Activated T-helper 1 cell treated with anti-CD3 and anti-CD28 coated beads, Interleukin-12 subunit alpha, Interleukin-12 subunit beta, Interleukin-2, Interleukin-4 antibody, amounts not matched to agents 30 ng/mL and 10 ng/mL and 1 ng/mL, durations not matched to agents 14 hours and 24 hours and 36 hours (primary cell): ENCODE measurements at regions of chr4 and their contacts with region 1.

Region 1: DNA sequence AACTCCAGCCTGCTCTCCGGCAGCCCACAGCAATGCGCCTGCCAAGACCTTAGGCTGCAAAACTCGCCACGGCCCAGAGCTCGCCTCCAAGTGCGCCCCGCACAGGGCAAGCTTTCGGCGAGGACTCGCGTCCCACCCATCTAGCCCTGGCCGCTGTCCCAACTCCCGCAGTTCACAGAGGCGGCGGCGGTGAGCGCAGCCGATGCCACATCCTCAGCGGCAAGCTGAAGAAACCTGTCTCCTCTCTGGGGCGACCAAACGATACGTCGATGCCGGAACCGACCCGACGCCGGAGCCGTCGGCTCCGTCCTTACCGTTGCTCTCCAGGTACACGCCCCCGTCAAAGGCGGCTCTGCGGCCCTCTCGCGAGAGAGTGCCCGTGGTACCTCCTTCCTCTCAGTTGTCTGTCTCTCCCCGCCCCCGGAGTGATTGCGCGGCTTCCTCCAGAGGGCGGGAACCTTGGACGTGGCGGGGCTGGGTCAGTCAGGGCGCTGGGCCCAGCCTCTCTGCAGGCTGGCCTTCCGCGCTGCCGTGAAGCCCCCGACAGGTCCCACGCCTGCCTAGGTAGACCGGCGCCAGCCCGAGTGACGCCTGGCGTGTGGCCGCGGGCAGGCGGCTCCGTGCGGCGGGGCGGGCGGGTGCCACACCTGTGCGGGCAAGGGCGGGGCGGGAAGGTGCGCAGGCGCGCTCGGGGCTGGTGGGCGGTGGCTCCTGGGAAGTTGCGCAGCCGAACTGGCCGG is 380 bp upstream of the RAB33B start:
- DNase-seq: peak; percentile 95
- H3K4me3 Mint-ChIP-seq: peak overlapping the region; percentile 94
- H3K27ac Mint-ChIP-seq: peak overlapping the region; percentile 99
- H3K4me1 Mint-ChIP-seq: peaks cover 58% of the 10 kb centered on the region
- H3K27me3 Mint-ChIP-seq: no peaks in the 10 kb centered on the region

Region 2: GRCh38 chr4:139015269-139015947 is 438.1 kb before region 1 on chr4 and contains the start of gene NOCT:
- intact Hi-C with region 1: loop called (anchors 1 kb)
- DNase-seq: peak; percentile 90
- H3K4me3 Mint-ChIP-seq: peak within 1 kb of the TSS; percentile 96
- H3K27ac Mint-ChIP-seq: peak within 1 kb of the TSS; percentile 91
- H3K4me1 Mint-ChIP-seq: peaks cover 43% of the 10 kb centered on the region
- H3K27me3 Mint-ChIP-seq: no peaks in the 10 kb centered on the region
- total RNA-seq, gene NOCT: 24.1 and 26.9 TPM in 2 replicates

Region 3: GRCh38 chr4:139266583-139267257 is 186.8 kb before region 1 on chr4:
- intact Hi-C with region 1: loop called (anchors 1 kb)
- DNase-seq: peak; percentile 70
- H3K4me3 Mint-ChIP-seq: peak overlapping the region; percentile 50
- H3K27ac Mint-ChIP-seq: peak overlapping the region; percentile 10
- H3K4me1 Mint-ChIP-seq: peaks cover 21% of the 10 kb centered on the region
- H3K27me3 Mint-ChIP-seq: peaks cover 23% of the 10 kb centered on the region

Region 4: DNA sequence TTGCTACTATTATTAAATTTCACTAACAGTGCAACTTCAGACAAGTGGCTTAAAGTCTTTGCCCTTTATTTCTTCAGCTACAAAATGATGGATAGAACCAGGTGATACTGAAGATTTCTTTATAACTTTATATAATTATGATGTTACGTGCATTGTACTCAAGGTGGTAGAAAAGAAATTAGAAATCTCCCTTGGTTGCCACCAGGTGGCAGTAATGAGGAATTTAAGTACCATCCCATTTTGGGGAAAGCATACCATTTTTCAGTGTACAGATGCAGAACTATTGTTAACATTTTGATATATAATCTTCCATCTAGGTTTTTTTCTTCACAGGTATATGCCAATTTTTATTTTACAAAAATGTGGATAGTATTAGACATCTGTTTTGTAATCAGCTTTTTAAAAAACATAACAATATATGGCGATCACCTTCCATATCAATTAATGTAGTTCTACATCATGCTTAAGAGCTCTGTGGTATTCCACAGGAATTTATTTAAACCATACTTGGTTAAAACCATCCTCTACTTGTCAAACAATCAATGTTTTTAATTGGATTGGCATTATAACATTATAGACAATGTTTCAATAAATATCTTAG is 37.4 kb before region 1 on chr4:
- intact Hi-C with region 1: loop called (anchors 1 kb)
- DNase-seq: peak; percentile 3
- H3K4me3 Mint-ChIP-seq: no peak overlapping the region
- H3K27ac Mint-ChIP-seq: no peak overlapping the region
- H3K4me1 Mint-ChIP-seq: peaks cover 27% of the 10 kb centered on the region
- H3K27me3 Mint-ChIP-seq: no peaks in the 10 kb centered on the region

Region 5: DNA sequence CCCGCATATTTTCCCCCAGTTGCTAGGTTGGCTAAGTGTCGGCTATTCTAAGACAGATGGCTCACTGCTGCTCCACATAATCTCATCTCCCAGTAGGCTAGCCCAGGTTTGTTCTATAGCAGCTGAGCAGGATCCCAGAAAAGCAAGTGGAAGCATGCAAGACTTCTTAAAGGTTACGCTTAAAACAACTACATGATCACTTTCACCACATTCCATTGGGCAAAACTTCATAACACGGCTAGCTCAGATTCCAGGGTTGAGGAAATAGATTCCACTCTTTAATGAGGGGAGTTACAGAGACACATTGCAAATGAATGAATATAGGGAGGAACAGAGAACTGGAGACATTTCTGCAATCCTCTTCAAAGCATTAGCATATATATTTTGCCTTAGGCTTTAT is 12.5 kb before region 1 on chr4:
- intact Hi-C with region 1: no loop called
- DNase-seq: no peak
- H3K4me3 Mint-ChIP-seq: no peak overlapping the region
- H3K27ac Mint-ChIP-seq: no peak overlapping the region
- H3K4me1 Mint-ChIP-seq: no peaks in the 10 kb centered on the region
- H3K27me3 Mint-ChIP-seq: no peaks in the 10 kb centered on the region

Region 6: GRCh38 chr4:139484783-139485318 is 31.3 kb after region 1 on chr4:
- intact Hi-C with region 1: no loop called
- DNase-seq: no peak
- H3K4me3 Mint-ChIP-seq: no peak overlapping the region
- H3K27ac Mint-ChIP-seq: no peak overlapping the region
- H3K4me1 Mint-ChIP-seq: no peaks in the 10 kb centered on the region
- H3K27me3 Mint-ChIP-seq: peaks cover 7% of the 10 kb centered on the region

Region 7: GRCh38 chr4:139554893-139555704 is 101.6 kb after region 1 on chr4:
- intact Hi-C with region 1: loop called (anchors 1 kb)
- DNase-seq: peak; percentile 78
- H3K4me3 Mint-ChIP-seq: peak overlapping the region; percentile 93
- H3K27ac Mint-ChIP-seq: peak overlapping the region; percentile 96
- H3K4me1 Mint-ChIP-seq: peaks cover 47% of the 10 kb centered on the region
- H3K27me3 Mint-ChIP-seq: peaks cover 13% of the 10 kb centered on the region